ENCODE measurements at regions of chr3 and their contacts with region 1.

Region 1: DNA sequence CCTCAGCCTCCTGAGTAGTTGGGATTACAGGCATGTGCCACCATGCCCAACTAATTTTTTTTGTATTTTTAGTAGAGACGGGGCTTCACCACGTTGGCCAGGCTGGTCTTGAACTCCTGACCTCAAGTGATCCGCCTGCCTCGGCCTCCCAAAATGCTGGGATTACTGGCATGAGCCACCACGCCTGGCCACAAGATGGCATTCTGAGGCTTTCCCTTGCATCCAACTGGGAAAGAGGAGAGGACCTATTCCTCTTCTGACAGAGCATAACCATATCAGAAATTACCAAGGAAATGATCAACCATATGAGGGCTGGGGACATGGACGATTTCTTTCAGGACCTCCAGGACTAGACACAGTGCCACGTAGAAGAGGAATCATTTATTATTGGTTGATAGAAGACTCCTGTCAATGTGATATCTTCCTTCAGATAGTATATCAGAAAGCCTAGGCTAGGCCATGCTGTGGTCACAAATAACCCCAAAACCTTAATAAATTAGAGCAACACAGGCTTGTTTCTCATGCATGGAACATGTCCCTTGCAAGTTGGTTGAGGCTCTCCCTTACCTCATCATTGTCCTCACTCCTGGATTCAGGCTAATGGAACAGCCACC is 372.3 kb upstream of the IL12A start:
- DNase-seq: peak; percentile 43 to 69
- H3K4me3 ChIP-seq: no peak overlapping the region
- H3K27ac ChIP-seq: no peak overlapping the region
- H3K4me1 ChIP-seq: peaks cover 16% of the 10 kb centered on the region
- H3K27me3 ChIP-seq: no peaks in the 10 kb centered on the region
- CTCF ChIP-seq: peak; percentile 80

Region 2: GRCh38 chr3:159654186-159655134 is 38.1 kb after region 1 on chr3:
- CTCF ChIA-PET with region 1: no interaction called
- POLR2A ChIA-PET with region 1: interaction called, 10 read pairs
- intact Hi-C with region 1: no loop called
- DNase-seq: no peak
- H3K4me3 ChIP-seq: no peak overlapping the region
- H3K27ac ChIP-seq: no peak overlapping the region
- H3K4me1 ChIP-seq: no peaks in the 10 kb centered on the region; the same call in 1 of the 2 replicates
- H3K27me3 ChIP-seq: no peaks in the 10 kb centered on the region
- CTCF ChIP-seq: no peak

Region 3: GRCh38 chr3:159721324-159721723 is 105.0 kb after region 1 on chr3:
- CTCF ChIA-PET with region 1: no interaction called
- POLR2A ChIA-PET with region 1: no interaction called
- intact Hi-C with region 1: no loop called
- DNase-seq: no peak
- H3K4me3 ChIP-seq: no peak overlapping the region
- H3K27ac ChIP-seq: no peak overlapping the region
- H3K4me1 ChIP-seq: peaks cover 7% of the 10 kb centered on the region
- H3K27me3 ChIP-seq: no peaks in the 10 kb centered on the region; the same call in 1 of the 2 replicates
- CTCF ChIP-seq: no peak

Region 4: GRCh38 chr3:159732172-159733111 is 116.1 kb after region 1 on chr3:
- CTCF ChIA-PET with region 1: no interaction called
- POLR2A ChIA-PET with region 1: no interaction called
- intact Hi-C with region 1: loop called (anchors 1 kb)
- DNase-seq: peak; percentile 69 to 73
- H3K4me3 ChIP-seq: peak overlapping the region; percentile 38; the same call in 1 of the 2 replicates
- H3K27ac ChIP-seq: no peak overlapping the region
- H3K4me1 ChIP-seq: peaks cover 23% of the 10 kb centered on the region
- H3K27me3 ChIP-seq: no peaks in the 10 kb centered on the region
- CTCF ChIP-seq: no peak

Region 5: DNA sequence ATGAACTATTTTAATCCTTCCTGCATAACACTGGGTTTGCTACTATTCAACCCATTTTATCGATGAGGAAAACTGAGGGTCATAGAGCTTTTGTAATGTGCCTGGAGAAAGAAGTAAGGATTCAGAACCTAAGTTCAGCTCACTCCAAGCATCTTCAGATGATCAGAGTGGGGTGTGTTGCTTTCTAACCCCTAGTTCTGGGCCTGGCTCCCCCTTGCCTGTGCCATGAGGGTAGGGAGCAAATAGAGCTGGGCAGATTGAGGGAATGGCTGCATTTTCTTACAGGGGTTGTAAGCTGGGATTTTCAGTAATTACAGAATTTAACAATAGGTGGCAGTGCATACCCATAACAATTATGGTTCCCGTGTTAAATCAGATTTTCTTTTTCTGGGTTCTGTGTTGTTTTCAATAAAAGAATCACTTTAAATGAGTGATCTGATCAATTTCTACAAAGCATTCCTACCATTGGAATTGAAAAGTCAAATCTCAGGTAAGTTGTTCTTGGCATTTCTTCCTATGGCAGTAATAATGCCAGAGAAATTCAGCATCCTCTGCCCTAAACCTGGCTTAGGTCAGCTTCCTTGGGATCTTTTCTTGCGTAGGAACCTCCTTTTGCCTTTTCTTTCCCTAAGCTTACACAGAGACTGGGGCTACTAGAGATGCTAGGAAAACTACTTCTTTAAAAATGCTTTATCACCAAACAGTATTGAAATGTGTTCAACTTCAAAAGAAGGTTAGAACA is 268.5 kb after region 1 on chr3:
- CTCF ChIA-PET with region 1: no interaction called
- POLR2A ChIA-PET with region 1: no interaction called
- intact Hi-C with region 1: loop called (anchors 5 kb)
- DNase-seq: peak; percentile 15 to 45
- H3K4me3 ChIP-seq: no peak overlapping the region
- H3K27ac ChIP-seq: no peak overlapping the region
- H3K4me1 ChIP-seq: no peaks in the 10 kb centered on the region
- H3K27me3 ChIP-seq: no peaks in the 10 kb centered on the region
- CTCF ChIP-seq: peak; percentile 85

Measured in PC-9 (cell line).